Heart right ventricle (tissue), 16 donors: ENCODE measurements at regions of chr6 and their contacts with region 1.

Region 1: GRCh38 chr6:56279346-56280080 is 32.1 kb upstream of the COL21A1 start:
- DNase-seq: no peak
- ATAC-seq: no peak
- H3K4me3 ChIP-seq: no peak overlapping the region
- H3K27ac ChIP-seq: no peak overlapping the region
- H3K4me1 ChIP-seq: no peaks in the 10 kb centered on the region
- H3K27me3 ChIP-seq: no peaks in the 10 kb centered on the region
- CTCF ChIP-seq: no peak

Region 2: GRCh38 chr6:55997217-55997869 is 282.2 kb before region 1 on chr6:
- intact Hi-C with region 1: loop called in 1 of 10 experiments (anchors 5 kb)
- DNase-seq: no peak
- ATAC-seq: no peak
- H3K4me3 ChIP-seq: no peak overlapping the region
- H3K27ac ChIP-seq: no peak overlapping the region
- H3K4me1 ChIP-seq: no peaks in the 10 kb centered on the region
- H3K27me3 ChIP-seq: no peaks in the 10 kb centered on the region
- CTCF ChIP-seq: no peak

Region 3: GRCh38 chr6:56072856-56073255 is 206.7 kb before region 1 on chr6:
- intact Hi-C with region 1: no loop called
- DNase-seq: no peak
- ATAC-seq: peak in 5 of 8 donors; percentile 33 to 85 (median 68)
- H3K4me3 ChIP-seq: no peak overlapping the region
- H3K27ac ChIP-seq: peak overlapping the region in 7 of 10 donors; percentile 11 to 59 (median 39)
- H3K4me1 ChIP-seq: peaks cover 0 to 17% (median 7%) of the 10 kb centered on the region in 9 donors
- H3K27me3 ChIP-seq: no peaks in the 10 kb centered on the region
- CTCF ChIP-seq: no peak

Region 4: DNA sequence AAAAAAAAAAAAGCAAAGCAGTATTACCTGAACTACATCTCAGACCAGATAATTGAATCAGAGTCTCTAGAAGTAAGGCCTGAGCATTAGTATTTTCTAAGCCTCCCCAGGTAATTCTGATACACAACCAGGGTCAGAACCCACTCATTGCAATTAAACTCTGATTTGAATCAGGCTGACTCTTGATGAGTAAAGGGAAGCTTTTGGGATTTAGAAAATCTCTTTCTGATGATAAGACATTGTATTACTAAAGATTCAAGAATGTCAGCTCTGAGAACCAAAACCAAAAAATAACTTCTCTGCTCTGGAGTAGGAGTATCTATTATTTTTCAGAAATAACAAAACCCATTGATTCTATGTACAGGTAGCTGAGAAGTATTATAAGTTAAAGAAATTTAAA is 68.0 kb after region 1 on chr6:
- intact Hi-C with region 1: no loop called
- DNase-seq: no peak
- ATAC-seq: no peak
- H3K4me3 ChIP-seq: no peak overlapping the region
- H3K27ac ChIP-seq: no peak overlapping the region
- H3K4me1 ChIP-seq: peaks cover 0 to 12% (median 0%) of the 10 kb centered on the region in 9 donors
- H3K27me3 ChIP-seq: peaks cover 0 to 3% (median 0%) of the 10 kb centered on the region in 7 donors
- CTCF ChIP-seq: no peak